ENCODE measurements at regions of chr11 and their contacts with region 1.

Region 1: DNA sequence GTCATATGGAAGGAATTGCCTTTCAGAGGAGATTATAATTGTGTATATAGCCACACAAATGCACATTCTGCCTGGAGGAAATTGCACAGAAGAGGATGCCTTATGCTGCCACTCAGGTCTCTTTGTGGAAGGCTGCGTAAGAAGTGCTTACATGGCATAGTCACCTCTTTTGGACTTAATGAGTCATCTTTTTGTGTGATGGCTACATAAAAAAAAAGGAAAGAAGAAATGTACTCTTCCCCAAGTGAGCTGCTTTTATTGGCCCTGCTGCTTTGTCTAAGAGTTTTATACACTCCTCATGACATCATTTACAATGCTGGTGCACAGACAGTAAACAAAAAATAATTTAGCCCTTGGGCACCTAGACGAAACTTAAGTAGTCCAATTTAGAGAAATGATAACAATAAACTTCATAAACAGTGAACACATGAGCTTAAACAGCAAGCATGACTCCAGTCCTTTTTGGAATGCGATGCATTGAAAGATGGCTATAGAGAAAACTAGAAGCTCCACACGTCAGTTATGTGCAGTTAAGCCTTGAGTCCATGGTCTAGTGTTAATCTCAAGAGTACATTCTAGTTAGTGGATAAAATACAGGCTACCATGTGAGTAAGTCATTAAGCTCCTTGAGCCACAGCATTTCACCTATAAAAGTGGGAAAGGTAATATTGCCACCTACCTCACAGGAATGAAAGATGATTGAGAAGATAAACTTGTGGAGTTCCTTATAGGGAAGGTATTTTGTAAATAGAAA is 12.0 kb downstream of the CSTPP1 start:
- DNase-seq: peak; percentile 49

Region 2: GRCh38 chr11:46889689-46890475 is 58.7 kb before region 1 on chr11:
- CTCF ChIA-PET with region 1: no interaction called
- POLR2A ChIA-PET with region 1: no interaction called
- DNase-seq: peak; percentile 74

Region 3: DNA sequence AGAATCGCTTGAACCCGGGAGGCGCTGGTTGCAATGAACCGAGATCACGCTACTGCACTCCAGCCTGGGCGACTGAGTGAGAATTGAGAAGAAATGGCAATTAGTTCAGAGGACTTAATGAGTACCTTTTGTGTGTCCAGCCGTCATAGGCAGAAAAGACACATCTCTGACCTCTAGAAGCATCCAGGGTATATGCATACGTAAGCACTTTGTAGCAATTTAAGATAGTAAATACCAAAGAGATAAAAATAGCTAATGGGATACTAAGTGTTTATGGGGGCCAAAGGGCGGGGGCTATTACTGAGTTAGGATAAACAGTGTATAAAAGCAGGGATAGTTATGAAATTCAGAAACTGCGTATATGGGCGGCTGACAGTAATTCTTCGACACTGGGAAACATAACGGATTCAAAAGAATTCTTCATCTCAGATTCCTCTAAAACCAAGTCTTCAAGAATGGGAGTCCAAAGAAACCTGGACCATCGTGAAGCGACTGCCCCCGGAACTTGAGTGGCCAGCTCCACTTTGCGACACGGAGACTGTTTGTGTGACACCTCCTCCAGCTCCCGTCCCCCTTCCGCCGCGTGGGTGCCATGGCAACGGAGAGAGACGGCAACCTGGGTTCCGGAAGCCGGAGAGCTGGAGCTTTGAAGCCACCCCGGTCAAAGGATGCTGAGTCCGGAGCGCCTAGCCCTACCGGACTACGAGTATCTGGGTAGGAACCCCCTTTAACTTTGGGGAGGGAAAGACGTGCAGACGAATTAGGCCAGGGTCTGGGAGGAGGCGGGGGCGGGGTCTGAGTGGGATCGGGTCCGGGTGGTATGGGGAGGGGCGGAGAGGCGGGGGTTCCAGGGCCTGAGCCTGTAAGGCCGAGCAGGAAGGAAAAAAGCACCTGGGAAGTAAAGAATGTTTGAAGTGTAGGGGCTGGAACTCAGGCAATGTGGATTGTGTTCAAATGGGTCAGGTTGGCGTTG is 12.1 kb before region 1 on chr11 and contains the start of gene CSTPP1:
- CTCF ChIA-PET with region 1: no interaction called
- POLR2A ChIA-PET with region 1: interaction called, 19 read pairs
- DNase-seq: peak; percentile 95

Region 4: DNA sequence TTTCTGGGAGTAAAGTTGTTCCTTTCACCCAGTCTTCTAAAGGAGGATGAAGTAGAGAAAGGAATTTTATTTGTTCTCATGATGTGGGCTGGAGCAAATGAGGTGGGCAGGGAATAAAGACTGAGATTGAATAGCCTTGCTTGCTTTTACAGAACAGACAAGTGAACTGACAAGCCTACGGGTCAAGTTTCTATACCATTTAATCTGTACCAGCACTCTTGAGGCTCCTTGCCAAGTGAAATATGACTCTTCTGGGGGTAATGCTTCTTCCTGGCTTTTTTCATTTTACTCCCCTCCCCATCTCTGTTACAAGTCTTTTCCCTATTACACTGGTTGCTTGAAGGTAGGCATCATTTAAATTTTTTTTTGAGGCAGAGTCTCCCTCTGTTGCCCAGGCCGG is 42.8 kb after region 1 on chr11:
- CTCF ChIA-PET with region 1: no interaction called
- POLR2A ChIA-PET with region 1: no interaction called
- DNase-seq: no peak

Measured in HEK293T (cell line).